ENCODE measurements at regions of chr4 and their contacts with region 1.

Region 1: GRCh38 chr4:55948726-55949474 is at the start of gene CEP135:
- DNase-seq: peak; percentile 91 to 96 (median 94)
- H3K4me3 ChIP-seq: peak within 1 kb of the TSS; percentile 91
- H3K27ac ChIP-seq: peak within 1 kb of the TSS in 1 of 2 donors; percentile 82
- H3K4me1 ChIP-seq: peaks cover 10% of the 10 kb centered on the region
- H3K27me3 ChIP-seq: no peaks in the 10 kb centered on the region
- CTCF ChIP-seq: peak; percentile 87 to 91 (median 91)
- EP300 ChIP-seq: no peak
- POLR2A ChIP-seq: no peak
- total RNA-seq, gene CEP135: 4.3 to 11.5 (median 8.6) TPM

Region 2: GRCh38 chr4:56077676-56078075 is 128.8 kb after region 1 on chr4:
- intact Hi-C with region 1: no loop called
- DNase-seq: no peak
- H3K4me3 ChIP-seq: no peak overlapping the region
- H3K27ac ChIP-seq: no peak overlapping the region
- H3K4me1 ChIP-seq: no peaks in the 10 kb centered on the region
- H3K27me3 ChIP-seq: no peaks in the 10 kb centered on the region
- CTCF ChIP-seq: no peak
- EP300 ChIP-seq: no peak
- POLR2A ChIP-seq: no peak

Region 3: GRCh38 chr4:56544573-56545131 is 595.8 kb after region 1 on chr4:
- intact Hi-C with region 1: loop called in 1 of 4 experiments (anchors 10 kb)
- DNase-seq: peak; percentile 82 to 93 (median 90)
- H3K4me3 ChIP-seq: peak overlapping the region; percentile 41
- H3K27ac ChIP-seq: no peak overlapping the region
- H3K4me1 ChIP-seq: no peaks in the 10 kb centered on the region
- H3K27me3 ChIP-seq: no peaks in the 10 kb centered on the region
- CTCF ChIP-seq: peak; percentile 88 to 97 (median 89)
- EP300 ChIP-seq: no peak
- POLR2A ChIP-seq: no peak